Activated naive CD4-positive, alpha-beta T cell treated with anti-CD3 and anti-CD28 coated beads, Interleukin-2, amount 10 ng/mL, durations not matched to agents 7 days and 5 days (primary cell): ENCODE measurements at regions of chr10 and their contacts with region 1.

Region 1: GRCh38 chr10:101141616-101142532 is 10.8 kb downstream of the TLX1 start:
- DNase-seq: peak; percentile 86
- H3K4me3 Mint-ChIP-seq: no peak overlapping the region
- H3K27ac Mint-ChIP-seq: no peak overlapping the region
- H3K4me1 Mint-ChIP-seq: peaks cover 3% of the 10 kb centered on the region
- H3K27me3 Mint-ChIP-seq: peaks cover 100% of the 10 kb centered on the region

Region 2: DNA sequence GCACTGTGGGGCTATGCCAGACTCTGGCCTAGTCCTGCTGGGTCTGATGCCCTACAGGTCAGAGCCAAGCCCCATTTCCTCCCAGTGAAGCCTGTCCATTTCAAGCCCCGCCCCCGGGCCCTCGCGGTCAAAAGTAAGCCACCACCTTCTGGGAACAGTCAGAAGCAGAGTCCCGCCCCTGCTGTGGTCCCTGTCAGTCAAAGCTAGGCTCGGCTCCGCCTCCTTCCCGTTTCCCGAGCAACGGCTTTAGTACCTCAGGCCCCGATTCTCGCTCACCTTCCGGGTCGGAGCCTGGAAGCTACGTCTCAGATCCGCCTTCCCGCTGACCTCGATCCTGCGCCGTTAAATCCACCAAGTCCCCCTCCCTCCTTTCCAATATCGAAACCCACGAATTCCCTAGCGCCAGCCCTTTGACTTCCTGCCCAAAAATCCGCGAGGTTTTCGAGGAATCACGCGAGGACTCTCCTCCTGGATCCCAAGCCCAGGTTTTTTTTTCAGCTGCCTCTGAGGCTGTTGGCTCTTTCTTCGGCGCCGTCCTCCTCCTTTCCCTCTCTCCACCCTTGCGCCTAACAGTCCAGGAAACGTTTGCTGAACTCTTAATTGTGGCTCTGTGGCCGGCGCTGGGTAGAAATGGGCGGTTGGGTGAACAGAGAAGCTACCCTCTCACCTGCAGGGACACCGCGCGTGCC is 99.1 kb before region 1 on chr10:
- CTCF ChIA-PET with region 1: interaction called, 47 read pairs
- DNase-seq: peak; percentile 93
- H3K4me3 Mint-ChIP-seq: peak overlapping the region; percentile 96
- H3K27ac Mint-ChIP-seq: peak overlapping the region; percentile 78
- H3K4me1 Mint-ChIP-seq: peaks cover 31% of the 10 kb centered on the region
- H3K27me3 Mint-ChIP-seq: peaks cover 48% of the 10 kb centered on the region

Region 3: GRCh38 chr10:101060036-101060950 is 81.6 kb before region 1 on chr10:
- CTCF ChIA-PET with region 1: interaction called, 17 read pairs
- DNase-seq: peak; percentile 94
- H3K4me3 Mint-ChIP-seq: peak overlapping the region; percentile 75
- H3K27ac Mint-ChIP-seq: peak overlapping the region; percentile 81
- H3K4me1 Mint-ChIP-seq: peaks cover 53% of the 10 kb centered on the region
- H3K27me3 Mint-ChIP-seq: peaks cover 39% of the 10 kb centered on the region

Region 4: GRCh38 chr10:101085846-101086245 is 56.0 kb before region 1 on chr10:
- CTCF ChIA-PET with region 1: interaction called, 272 read pairs
- DNase-seq: no peak
- H3K4me3 Mint-ChIP-seq: no peak overlapping the region
- H3K27ac Mint-ChIP-seq: no peak overlapping the region
- H3K4me1 Mint-ChIP-seq: no peaks in the 10 kb centered on the region
- H3K27me3 Mint-ChIP-seq: peaks cover 99% of the 10 kb centered on the region

Region 5: DNA sequence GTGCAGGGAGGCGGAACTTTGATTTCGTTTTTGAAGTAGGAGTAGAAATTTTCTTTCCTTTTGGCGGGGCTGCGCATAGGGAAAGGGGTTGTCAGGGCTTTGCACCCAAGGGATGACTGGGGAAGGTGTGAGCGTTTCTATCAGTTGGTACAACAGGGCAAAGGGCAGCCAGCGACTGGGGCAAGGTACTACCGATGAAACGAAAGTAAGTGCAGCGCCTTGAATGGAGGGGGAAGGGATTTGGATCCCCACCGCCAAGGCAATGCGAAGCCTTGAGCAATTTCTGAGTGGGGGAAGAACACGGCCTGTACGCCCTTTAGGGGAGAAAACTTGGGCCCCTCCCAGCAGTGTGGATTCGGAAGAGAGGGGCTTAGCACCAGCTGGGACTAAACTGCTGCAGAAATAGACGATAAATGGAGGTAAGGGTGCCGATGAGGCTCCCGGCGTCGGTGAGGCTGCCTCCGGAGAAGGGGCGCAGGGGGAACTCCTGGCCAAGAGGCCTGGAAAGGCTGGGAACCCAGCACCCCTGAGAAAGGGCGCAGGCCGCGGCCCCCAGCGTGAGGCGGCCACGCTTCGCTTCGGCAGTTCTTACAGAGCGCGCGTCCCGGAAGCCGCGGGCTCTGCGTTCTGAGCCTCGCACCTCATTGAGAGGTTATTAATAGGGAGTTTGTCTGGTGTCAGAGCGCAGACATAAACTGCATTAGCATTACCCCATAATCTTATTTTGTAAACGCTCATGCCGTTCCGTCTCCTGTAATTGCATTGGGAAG is 20.8 kb before region 1 on chr10:
- CTCF ChIA-PET with region 1: interaction called, 25 read pairs
- DNase-seq: peak; percentile 58
- H3K4me3 Mint-ChIP-seq: peak overlapping the region; percentile 86
- H3K27ac Mint-ChIP-seq: peak overlapping the region; percentile 71
- H3K4me1 Mint-ChIP-seq: peaks cover 28% of the 10 kb centered on the region
- H3K27me3 Mint-ChIP-seq: peaks cover 91% of the 10 kb centered on the region

Region 6: GRCh38 chr10:101152316-101152715 is 10.4 kb after region 1 on chr10:
- CTCF ChIA-PET with region 1: interaction called, 23 read pairs
- DNase-seq: no peak
- H3K4me3 Mint-ChIP-seq: no peak overlapping the region
- H3K27ac Mint-ChIP-seq: no peak overlapping the region
- H3K4me1 Mint-ChIP-seq: no peaks in the 10 kb centered on the region
- H3K27me3 Mint-ChIP-seq: peaks cover 78% of the 10 kb centered on the region

Region 7: DNA sequence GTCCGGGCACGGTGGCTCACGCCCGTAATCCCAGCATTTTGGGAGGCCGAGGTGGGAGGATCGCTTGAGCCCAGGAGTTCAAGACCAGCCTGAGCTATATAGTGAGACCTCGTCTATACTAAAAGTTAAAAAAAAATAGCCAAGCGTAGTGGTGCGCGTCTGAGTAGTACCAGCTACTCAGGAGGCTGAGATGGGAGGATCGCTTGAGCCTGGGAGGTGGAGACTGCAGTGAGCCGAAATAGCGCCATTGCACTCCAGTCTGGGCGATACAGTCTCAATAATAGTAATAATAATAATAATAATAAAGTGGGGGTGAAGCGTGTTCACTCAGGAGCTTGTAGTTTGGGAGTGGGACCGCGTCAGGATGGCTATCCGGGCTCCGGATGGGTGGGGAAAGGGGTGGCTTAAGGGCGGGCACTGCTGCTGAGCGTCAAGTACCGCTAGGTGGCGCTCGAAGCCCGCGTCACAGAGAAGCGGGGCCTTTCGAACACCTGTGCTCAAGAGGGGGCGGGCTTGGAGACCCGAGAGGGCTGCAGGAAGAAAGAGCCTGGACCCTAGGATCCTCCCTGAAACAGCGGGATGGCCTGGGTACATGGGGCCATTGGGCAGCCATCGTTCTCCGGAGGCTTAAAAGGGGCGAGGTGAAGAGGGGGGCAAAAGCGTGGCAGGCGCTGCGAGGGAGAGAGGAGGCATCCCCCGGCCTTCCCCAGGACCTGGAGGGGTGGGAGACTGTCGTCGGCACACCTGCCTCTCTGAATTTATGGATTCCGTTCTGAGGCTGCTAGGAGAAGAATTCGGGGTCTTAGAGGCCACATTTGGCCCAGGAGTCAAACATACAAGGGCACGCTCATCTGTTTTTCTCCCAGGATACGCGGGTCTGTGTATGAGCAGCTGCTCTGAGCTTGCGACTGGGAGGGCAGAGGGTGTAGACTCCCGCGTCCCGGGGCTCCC is 72.8 kb after region 1 on chr10:
- CTCF ChIA-PET with region 1: interaction called, 12 read pairs
- DNase-seq: peak; percentile 80
- H3K4me3 Mint-ChIP-seq: peak overlapping the region; percentile 33
- H3K27ac Mint-ChIP-seq: peak overlapping the region; percentile 1
- H3K4me1 Mint-ChIP-seq: peaks cover 35% of the 10 kb centered on the region
- H3K27me3 Mint-ChIP-seq: peaks cover 100% of the 10 kb centered on the region